ENCODE measurements at regions of chr2 and their contacts with region 1.

Region 1: GRCh38 chr2:206783718-206784117 is 18.3 kb downstream of the FASTKD2 start:
- DNase-seq: no peak
- CTCF ChIP-seq: peak; percentile 31

Region 2: DNA sequence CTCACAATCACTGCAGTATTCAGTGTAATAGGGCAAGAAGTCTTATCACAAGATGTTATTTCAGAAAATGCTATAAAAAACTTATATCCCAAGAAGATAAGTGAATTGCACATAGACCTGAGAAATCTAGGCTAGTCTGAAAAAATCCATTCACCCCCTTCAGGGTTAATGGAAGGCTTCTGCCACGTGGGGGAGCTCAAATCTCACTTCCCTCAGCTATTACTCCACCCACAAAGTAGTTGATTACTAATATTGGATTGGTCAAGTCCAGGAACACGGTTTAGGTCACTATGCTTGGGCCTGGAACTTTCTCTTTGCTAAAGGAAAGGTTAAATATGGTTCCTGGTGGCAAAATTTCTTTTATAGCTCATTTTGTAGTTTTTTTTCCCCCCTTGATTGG is 391.6 kb before region 1 on chr2:
- in situ Hi-C with region 1: loop called (anchors 25 kb)
- DNase-seq: peak; percentile 74
- CTCF ChIP-seq: peak; percentile 68

Region 3: GRCh38 chr2:207423886-207424285 is 640.2 kb after region 1 on chr2:
- in situ Hi-C with region 1: no loop called
- DNase-seq: peak; percentile 41
- CTCF ChIP-seq: no peak

Region 4: GRCh38 chr2:207473049-207473930 is 689.6 kb after region 1 on chr2:
- in situ Hi-C with region 1: no loop called
- DNase-seq: peak; percentile 22
- CTCF ChIP-seq: peak; percentile 82